AG04450 (cell line): ENCODE measurements at regions of chr16 and their contacts with region 1.

Region 1: GRCh38 chr16:23595951-23596720 is at the start of gene NDUFAB1:
- DNase-seq: peak; percentile 48
- H3K4me3 ChIP-seq: peak within 1 kb of the TSS; percentile 77
- H3K27ac ChIP-seq: peak within 1 kb of the TSS; percentile 21
- H3K27me3 ChIP-seq: no peaks in the 10 kb centered on the region
- CTCF ChIP-seq: peak; percentile 91
- polyA plus RNA-seq, gene NDUFAB1: 97.6 and 130 TPM in 2 replicates

Region 2: DNA sequence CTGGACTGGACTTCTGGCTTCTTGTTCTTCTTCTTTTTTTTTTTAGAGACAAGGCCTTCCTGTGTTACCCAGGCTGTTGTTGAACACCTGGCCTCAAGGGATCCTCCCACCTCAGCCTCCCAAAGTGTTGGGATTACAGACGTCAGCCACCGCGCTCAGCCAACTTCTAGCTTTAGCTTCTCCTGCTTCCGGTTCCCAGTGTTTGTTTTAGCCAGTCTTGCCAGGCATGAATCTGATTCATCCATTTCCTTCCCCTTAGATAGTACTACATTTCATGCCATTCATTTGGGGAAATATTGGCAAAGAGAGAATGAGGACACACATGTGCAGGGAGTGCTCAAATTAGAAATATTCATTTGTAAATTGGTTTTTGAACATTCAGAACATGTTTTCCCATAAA is 12.1 kb after region 1 on chr16:
- CTCF ChIA-PET with region 1: interaction called, 14 read pairs
- POLR2A ChIA-PET with region 1: no interaction called
- DNase-seq: peak; percentile 8
- H3K4me3 ChIP-seq: no peak overlapping the region
- H3K27ac ChIP-seq: peak overlapping the region; percentile 52
- H3K27me3 ChIP-seq: no peaks in the 10 kb centered on the region
- CTCF ChIP-seq: no peak

Region 3: DNA sequence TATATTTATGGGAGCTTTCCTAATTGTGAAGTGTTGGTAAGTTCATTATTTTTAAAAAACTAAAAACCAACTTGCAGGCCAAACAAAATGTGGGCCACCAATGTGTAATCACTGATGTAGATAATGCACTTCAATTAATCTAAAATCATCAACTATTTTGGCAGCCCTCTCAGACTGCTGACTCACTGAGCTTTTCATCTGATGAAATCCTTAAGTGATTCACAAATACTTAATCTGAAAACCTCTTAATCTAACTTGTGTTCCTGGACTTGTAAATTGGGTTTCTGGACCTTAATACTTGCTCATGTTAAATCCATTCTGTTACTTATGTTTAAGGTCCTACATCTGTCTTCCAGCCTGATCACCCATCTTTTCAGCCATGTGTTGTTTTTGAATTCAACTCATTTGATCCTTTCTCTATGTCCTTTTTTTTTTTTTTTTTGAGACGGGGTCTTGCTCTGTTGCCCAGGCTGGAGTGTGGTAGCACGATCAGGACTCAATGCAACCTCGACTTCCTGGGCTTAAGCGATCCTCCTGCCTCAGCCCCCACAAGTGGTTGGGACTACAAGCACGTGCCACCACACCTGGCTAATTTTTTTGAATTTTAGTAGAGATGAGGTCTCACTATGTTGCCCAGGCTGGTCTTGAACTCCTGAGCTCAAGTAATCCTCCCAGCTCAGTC is 278.6 kb after region 1 on chr16:
- CTCF ChIA-PET with region 1: no interaction called
- POLR2A ChIA-PET with region 1: no interaction called
- DNase-seq: no peak
- H3K4me3 ChIP-seq: no peak overlapping the region
- H3K27ac ChIP-seq: no peak overlapping the region
- H3K27me3 ChIP-seq: no peaks in the 10 kb centered on the region
- CTCF ChIP-seq: no peak